ENCODE measurements at regions of chr11 and their contacts with region 1.

Region 1: DNA sequence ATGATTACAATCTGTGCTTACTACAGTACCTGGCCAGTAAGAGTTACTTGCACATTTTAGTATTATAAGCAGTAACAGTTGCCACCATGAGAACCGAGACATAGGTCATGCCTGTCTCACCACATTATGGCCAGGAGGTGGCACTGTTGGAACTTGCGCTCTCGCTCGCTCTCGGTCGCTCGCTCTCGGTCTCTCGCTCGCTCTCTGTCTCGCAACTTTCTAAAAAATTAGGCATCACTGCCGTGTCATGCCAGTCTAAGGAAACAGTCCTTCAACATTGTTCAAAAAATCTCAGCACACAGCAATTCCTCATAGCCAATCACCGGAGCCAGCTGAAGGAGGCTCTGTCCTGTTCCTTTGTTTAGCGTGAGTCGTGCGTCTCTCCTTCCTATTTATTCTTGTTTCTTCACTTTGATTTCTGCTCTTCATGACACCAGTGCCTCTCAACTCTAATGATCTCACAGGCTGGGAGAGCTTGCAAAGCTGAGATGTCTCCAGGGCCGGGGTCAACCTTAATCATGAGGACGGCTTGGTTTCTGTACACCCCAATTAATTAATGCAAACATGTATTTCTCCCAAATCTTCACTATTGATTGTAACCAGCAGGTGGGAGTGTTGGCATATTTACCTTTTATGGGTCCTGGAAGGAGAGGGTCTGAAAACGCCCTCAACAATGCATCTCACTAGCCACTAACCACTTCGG is 6.3 kb upstream of the ADAMTS8 start:
- DNase-seq: peak; percentile 34 to 67 (median 63)
- ATAC-seq: peak; percentile 93
- H3K4me3 ChIP-seq: peak overlapping the region; percentile 87
- H3K4me3 Mint-ChIP-seq: no peak overlapping the region
- H3K27ac ChIP-seq: peak overlapping the region; percentile 45
- H3K27ac Mint-ChIP-seq: no peak overlapping the region
- H3K4me1 ChIP-seq: peaks cover 0 to 8% of the 10 kb centered on the region in 2 donors
- H3K4me1 Mint-ChIP-seq: peaks cover 14 to 28% (median 16%) of the 10 kb centered on the region in 7 donors
- H3K27me3 ChIP-seq: no peaks in the 10 kb centered on the region
- H3K27me3 Mint-ChIP-seq: peaks cover 15 to 32% (median 18%) of the 10 kb centered on the region in 5 donors

Region 2: GRCh38 chr11:129267716-129268115 is 1167.0 kb before region 1 on chr11:
- CTCF ChIA-PET with region 1: no interaction called
- POLR2A ChIA-PET with region 1: no interaction called
- intact Hi-C with region 1: no loop called
- DNase-seq: no peak
- ATAC-seq: no peak
- H3K4me3 ChIP-seq: no peak overlapping the region
- H3K4me3 Mint-ChIP-seq: no peak overlapping the region
- H3K27ac ChIP-seq: no peak overlapping the region
- H3K27ac Mint-ChIP-seq: peak overlapping the region in 3 of 9 donors; percentile 28 to 58 (median 34)
- H3K4me1 ChIP-seq: no peaks in the 10 kb centered on the region
- H3K4me1 Mint-ChIP-seq: peaks cover 0 to 32% (median 9%) of the 10 kb centered on the region in 7 donors
- H3K27me3 ChIP-seq: no peaks in the 10 kb centered on the region
- H3K27me3 Mint-ChIP-seq: peaks cover under 1 to 10% (median 7%) of the 10 kb centered on the region in 5 donors

Region 3: GRCh38 chr11:129922674-129923073 is 512.0 kb before region 1 on chr11:
- CTCF ChIA-PET with region 1: no interaction called
- POLR2A ChIA-PET with region 1: no interaction called
- intact Hi-C with region 1: loop called in 1 of 2 experiments (anchors 10 kb)
- DNase-seq: peak in 1 of 9 donors; percentile 0
- ATAC-seq: no peak
- H3K4me3 ChIP-seq: no peak overlapping the region
- H3K4me3 Mint-ChIP-seq: peak overlapping the region in 1 of 10 donors; percentile 35
- H3K27ac ChIP-seq: no peak overlapping the region
- H3K27ac Mint-ChIP-seq: peak overlapping the region in 7 of 9 donors; percentile 13 to 58 (median 28)
- H3K4me1 ChIP-seq: peaks cover 0 to 4% of the 10 kb centered on the region in 2 donors
- H3K4me1 Mint-ChIP-seq: peaks cover 6 to 22% (median 18%) of the 10 kb centered on the region in 7 donors
- H3K27me3 ChIP-seq: no peaks in the 10 kb centered on the region
- H3K27me3 Mint-ChIP-seq: no peaks in the 10 kb centered on the region

Region 4: DNA sequence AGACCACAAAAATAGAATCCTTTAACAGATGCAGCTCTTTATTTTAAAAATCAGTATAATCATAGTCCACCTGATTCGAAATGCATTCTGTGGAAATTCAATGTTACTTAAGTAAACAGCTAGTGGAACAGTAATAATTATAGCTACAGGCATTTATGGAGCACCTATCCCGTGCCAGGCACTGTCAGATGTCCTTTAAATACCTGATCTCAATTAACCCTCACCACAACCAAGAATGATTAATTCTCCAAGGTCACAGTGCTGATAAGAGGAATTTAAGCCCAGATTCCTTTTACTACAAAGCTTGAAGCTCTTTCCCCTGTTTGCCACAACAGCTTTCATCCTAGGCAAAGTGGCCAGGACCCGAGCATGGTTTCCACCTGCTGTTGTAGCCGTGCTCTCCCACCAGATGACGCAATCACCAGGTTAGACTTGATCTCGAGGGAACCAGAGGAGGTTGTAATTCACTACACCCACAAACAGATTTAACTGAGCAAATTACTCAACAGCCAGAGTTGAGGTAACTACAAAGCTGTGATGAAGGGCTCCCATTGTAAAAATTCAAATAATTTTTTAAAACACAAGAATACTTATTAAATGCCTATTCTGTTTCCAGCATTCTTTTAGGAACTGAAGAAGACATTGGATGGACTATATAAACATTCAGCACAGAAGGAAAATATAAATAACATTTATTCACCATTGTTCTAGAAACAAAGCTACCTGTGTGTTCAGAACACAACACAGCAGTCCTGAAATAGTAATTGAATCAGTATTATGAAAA is 442.3 kb before region 1 on chr11:
- CTCF ChIA-PET with region 1: no interaction called
- POLR2A ChIA-PET with region 1: no interaction called
- intact Hi-C with region 1: no loop called
- DNase-seq: peak in 7 of 9 donors; percentile 9 to 55 (median 33)
- ATAC-seq: peak; percentile 73
- H3K4me3 ChIP-seq: no peak overlapping the region
- H3K4me3 Mint-ChIP-seq: no peak overlapping the region
- H3K27ac ChIP-seq: no peak overlapping the region
- H3K27ac Mint-ChIP-seq: peak overlapping the region in 3 of 9 donors; percentile 32 to 66 (median 36)
- H3K4me1 ChIP-seq: no peaks in the 10 kb centered on the region
- H3K4me1 Mint-ChIP-seq: peaks cover 5 to 26% (median 19%) of the 10 kb centered on the region in 7 donors
- H3K27me3 ChIP-seq: no peaks in the 10 kb centered on the region
- H3K27me3 Mint-ChIP-seq: no peaks in the 10 kb centered on the region

Region 5: DNA sequence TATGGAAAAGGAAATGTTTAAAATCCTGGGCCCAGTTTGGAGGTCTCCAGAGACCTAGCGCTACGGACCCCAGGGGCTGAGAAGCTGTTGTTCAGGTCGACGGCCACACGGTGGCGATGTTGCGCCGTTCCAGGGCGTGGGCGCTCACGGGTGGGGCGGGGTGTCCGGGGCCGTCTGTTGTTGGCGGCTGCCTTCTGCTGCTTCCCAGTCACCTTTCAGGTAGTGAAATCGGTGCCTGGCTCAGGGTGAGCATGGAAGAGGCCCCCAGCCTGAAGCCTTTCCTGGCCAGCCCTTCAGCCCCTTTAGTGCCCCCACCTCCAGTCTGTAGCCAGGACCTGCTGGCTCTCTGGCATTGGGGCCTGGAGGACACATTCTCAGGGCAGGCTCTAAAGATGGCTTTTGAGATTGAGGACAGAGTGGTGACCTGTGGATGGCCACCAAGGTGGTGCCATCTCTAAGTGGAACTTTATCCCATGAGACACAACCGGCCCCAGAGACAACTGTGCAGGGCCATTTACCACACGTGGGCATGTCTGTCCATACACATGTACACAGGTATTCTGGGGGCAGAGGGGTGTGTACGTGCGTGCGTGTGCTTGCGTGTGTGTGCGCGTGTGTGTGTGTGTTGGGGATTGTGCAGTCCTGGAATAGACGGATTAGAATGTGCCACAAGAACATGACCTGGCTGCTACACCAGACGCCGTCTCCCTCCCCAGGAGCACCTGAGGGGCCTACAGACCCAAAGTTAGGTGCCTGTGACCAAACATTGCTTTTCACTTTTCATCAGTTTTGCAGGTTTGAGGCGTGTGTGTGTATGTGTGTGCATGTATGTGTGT is 221.3 kb before region 1 on chr11:
- CTCF ChIA-PET with region 1: interaction called, 8 read pairs
- POLR2A ChIA-PET with region 1: no interaction called
- intact Hi-C with region 1: loop called (anchors 1 kb)
- DNase-seq: peak; percentile 39 to 83 (median 67)
- ATAC-seq: peak; percentile 92
- H3K4me3 ChIP-seq: no peak overlapping the region
- H3K4me3 Mint-ChIP-seq: no peak overlapping the region
- H3K27ac ChIP-seq: no peak overlapping the region
- H3K27ac Mint-ChIP-seq: no peak overlapping the region
- H3K4me1 ChIP-seq: no peaks in the 10 kb centered on the region
- H3K4me1 Mint-ChIP-seq: peaks cover 0 to 2% (median 0%) of the 10 kb centered on the region in 7 donors
- H3K27me3 ChIP-seq: no peaks in the 10 kb centered on the region
- H3K27me3 Mint-ChIP-seq: peaks cover 0 to 11% (median 0%) of the 10 kb centered on the region in 5 donors

Region 6: DNA sequence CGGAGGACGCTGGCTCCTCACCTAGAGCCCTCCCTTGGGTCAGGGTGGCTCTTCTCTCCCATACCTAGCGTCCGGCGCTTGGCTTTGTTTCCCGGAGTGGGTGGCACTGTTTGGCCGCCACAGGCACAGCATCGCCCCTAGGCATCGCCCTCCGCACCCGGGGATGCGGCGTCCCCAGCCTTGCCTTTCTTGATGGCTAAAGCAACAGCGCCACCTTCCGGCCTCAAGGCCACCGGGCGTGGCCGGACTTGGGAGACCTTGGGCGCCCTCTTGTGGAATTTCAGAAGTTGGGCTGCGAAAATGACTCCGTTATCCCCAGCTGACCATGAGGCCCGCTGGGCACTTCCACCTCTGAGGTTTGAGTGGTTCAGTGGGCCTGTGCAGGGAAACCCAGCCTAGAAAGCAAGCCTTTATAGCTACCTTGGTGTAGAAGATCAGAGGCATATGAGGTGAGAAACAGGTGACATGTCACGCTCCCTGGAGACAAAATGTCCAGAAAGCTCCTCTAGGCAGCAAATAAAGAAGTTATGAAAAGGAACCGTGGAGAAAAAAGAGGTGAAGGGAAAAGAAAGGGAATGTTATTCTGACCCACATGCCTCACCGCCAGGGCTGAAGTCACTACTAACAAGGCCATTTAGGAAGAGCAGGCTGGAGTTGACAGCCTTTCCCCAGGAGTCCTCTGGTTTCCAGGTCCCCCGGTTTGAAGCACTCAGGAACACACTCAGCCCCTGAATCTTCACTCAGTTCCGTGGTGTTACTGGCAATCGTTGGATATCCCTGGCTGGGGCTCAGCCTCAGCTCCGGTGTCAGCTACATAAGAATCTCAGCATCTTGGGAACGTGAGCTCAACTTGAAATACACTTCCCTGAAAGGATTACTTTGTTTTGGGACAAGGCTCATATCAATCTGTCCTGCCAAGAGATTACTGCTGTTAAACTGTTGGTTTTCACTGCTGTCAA is 427.5 kb after region 1 on chr11:
- CTCF ChIA-PET with region 1: interaction called, 59 read pairs
- POLR2A ChIA-PET with region 1: interaction called, 3 read pairs
- intact Hi-C with region 1: loop called (anchors 1 kb)
- DNase-seq: peak; percentile 71 to 87 (median 82)
- ATAC-seq: peak; percentile 95
- H3K4me3 ChIP-seq: no peak overlapping the region
- H3K4me3 Mint-ChIP-seq: peak overlapping the region in 1 of 10 donors; percentile 10
- H3K27ac ChIP-seq: no peak overlapping the region
- H3K27ac Mint-ChIP-seq: peak overlapping the region in 3 of 9 donors; percentile 26 to 72 (median 32)
- H3K4me1 ChIP-seq: no peaks in the 10 kb centered on the region
- H3K4me1 Mint-ChIP-seq: peaks cover 0 to 7% (median 6%) of the 10 kb centered on the region in 7 donors
- H3K27me3 ChIP-seq: no peaks in the 10 kb centered on the region
- H3K27me3 Mint-ChIP-seq: peaks cover 0 to 5% (median 1%) of the 10 kb centered on the region in 5 donors

Region 7: GRCh38 chr11:130894322-130895025 is 459.8 kb after region 1 on chr11:
- CTCF ChIA-PET with region 1: interaction called, 3 read pairs
- POLR2A ChIA-PET with region 1: no interaction called
- intact Hi-C with region 1: loop called (anchors 1 kb)
- DNase-seq: peak; percentile 33 to 64 (median 49)
- ATAC-seq: peak; percentile 94
- H3K4me3 ChIP-seq: no peak overlapping the region
- H3K4me3 Mint-ChIP-seq: no peak overlapping the region
- H3K27ac ChIP-seq: no peak overlapping the region
- H3K27ac Mint-ChIP-seq: peak overlapping the region in 2 of 9 donors; percentile 22 to 38
- H3K4me1 ChIP-seq: no peaks in the 10 kb centered on the region
- H3K4me1 Mint-ChIP-seq: peaks cover 0 to 9% (median 9%) of the 10 kb centered on the region in 7 donors
- H3K27me3 ChIP-seq: no peaks in the 10 kb centered on the region
- H3K27me3 Mint-ChIP-seq: no peaks in the 10 kb centered on the region

Region 8: GRCh38 chr11:130916238-130916855 is 481.7 kb after region 1 on chr11 and contains the start of gene SNX19:
- CTCF ChIA-PET with region 1: no interaction called
- POLR2A ChIA-PET with region 1: no interaction called
- intact Hi-C with region 1: loop called in 1 of 2 experiments (anchors 1 kb)
- DNase-seq: peak; percentile 83 to 96 (median 89)
- ATAC-seq: peak; percentile 100
- H3K4me3 ChIP-seq: peak within 1 kb of the TSS; percentile 54
- H3K4me3 Mint-ChIP-seq: peak within 1 kb of the TSS; percentile 83 to 91 (median 88)
- H3K27ac ChIP-seq: peak within 1 kb of the TSS; percentile 84
- H3K27ac Mint-ChIP-seq: peak within 1 kb of the TSS; percentile 85 to 95 (median 92)
- H3K4me1 ChIP-seq: peaks cover 9 to 16% of the 10 kb centered on the region in 2 donors
- H3K4me1 Mint-ChIP-seq: peaks cover 5 to 53% (median 40%) of the 10 kb centered on the region in 7 donors
- H3K27me3 ChIP-seq: no peaks in the 10 kb centered on the region
- H3K27me3 Mint-ChIP-seq: peaks cover under 1 to 12% (median 10%) of the 10 kb centered on the region in 5 donors
- total RNA-seq, gene SNX19: 53.9 to 101 (median 57.1) TPM

Measured in naive thymus-derived CD4-positive, alpha-beta T cell (primary cell).